WTC11 (cell line): ENCODE measurements at regions of chr18 and their contacts with region 1.

Region 1: GRCh38 chr18:37537868-37538525 is 27.6 kb downstream of the CELF4 start:
- DNase-seq: peak; percentile 94
- ATAC-seq: peak; percentile 73
- H3K4me3 Mint-ChIP-seq: peak overlapping the region; percentile 60
- H3K27ac Mint-ChIP-seq: peak overlapping the region; percentile 2; the same call in 1 of the 2 replicates
- H3K4me1 Mint-ChIP-seq: peaks cover 46% of the 10 kb centered on the region
- H3K27me3 Mint-ChIP-seq: peaks cover 20% of the 10 kb centered on the region
- CTCF ChIP-seq: peak; percentile 79

Region 2: DNA sequence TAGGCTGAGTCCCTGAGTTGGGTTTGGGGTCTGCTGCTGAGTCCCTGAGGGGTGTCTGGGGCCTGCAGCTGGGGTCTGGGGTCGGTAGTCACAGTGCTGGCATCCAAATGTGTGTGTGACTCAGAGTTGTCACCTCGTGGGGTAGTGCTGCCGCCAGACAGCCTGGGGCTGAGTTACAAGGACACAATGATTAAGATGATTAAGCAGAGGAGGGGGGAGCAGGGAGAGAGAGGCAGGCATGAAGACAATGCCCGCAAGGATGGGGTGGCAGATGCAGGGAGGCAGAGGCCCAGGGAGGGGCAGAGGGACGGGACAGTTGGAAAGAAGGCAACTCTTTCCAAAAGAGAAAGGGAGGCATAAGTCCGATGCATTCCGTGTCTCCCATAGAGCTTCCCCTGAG is 92.6 kb before region 1 on chr18:
- CTCF ChIA-PET with region 1: interaction called, 11 read pairs
- POLR2A ChIA-PET with region 1: no interaction called
- DNase-seq: no peak
- ATAC-seq: no peak
- H3K4me3 Mint-ChIP-seq: no peak overlapping the region
- H3K27ac Mint-ChIP-seq: no peak overlapping the region
- H3K4me1 Mint-ChIP-seq: peaks cover 41% of the 10 kb centered on the region
- H3K27me3 Mint-ChIP-seq: peaks cover 7% of the 10 kb centered on the region; the same call in 1 of the 2 replicates
- CTCF ChIP-seq: no peak

Region 3: GRCh38 chr18:37476182-37476581 is 61.8 kb before region 1 on chr18:
- CTCF ChIA-PET with region 1: interaction called, 10 read pairs
- POLR2A ChIA-PET with region 1: no interaction called
- DNase-seq: peak; percentile 68
- ATAC-seq: peak; percentile 73
- H3K4me3 Mint-ChIP-seq: no peak overlapping the region
- H3K27ac Mint-ChIP-seq: no peak overlapping the region
- H3K4me1 Mint-ChIP-seq: peaks cover 21% of the 10 kb centered on the region
- H3K27me3 Mint-ChIP-seq: peaks cover 3% of the 10 kb centered on the region
- CTCF ChIP-seq: peak; percentile 80

Region 4: DNA sequence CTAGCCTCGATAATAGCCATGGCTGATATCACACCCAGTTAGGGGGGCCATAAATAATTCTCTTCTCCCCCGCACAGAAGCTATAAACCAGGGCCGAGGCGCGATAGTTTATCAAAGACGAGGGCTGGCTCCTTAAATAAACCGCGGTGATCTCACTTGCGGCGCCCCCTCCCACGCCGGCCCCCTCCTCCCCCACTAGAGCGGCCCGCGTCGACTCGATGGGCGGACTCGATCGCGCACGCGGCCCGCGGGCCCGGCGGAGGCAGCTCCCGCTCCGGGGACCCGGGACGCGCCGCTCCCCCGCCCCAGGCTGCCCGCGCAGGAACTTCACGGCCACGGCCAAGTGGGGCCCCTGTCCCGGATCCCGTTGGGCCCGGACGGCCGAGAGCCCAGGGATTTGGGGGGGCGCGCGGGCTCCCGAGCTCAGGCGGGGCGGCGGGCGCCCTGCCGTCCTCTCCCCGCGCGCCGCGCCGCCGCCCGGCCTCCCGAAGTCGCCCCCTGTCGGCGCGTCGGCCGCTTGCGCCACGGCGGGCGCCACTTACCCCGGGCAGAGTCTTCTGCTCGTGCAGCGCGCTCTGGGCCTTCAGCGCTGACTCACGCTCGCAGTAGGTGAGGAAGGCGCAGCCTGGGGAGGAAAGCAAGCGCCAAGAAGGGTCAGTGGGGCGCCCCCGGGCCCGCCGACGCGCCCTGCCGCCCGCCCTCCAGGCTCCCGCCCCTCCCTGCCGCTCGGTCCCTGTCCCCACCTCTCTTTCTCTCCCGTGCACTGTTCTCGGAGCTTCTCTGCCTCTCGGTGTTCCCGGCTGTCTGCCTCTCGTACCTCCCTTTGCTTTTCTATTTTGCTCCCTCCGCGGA is 52.8 kb before region 1 on chr18:
- CTCF ChIA-PET with region 1: interaction called, 54 read pairs
- POLR2A ChIA-PET with region 1: no interaction called
- DNase-seq: peak; percentile 72
- ATAC-seq: peak; percentile 68
- H3K4me3 Mint-ChIP-seq: peak overlapping the region; percentile 66
- H3K27ac Mint-ChIP-seq: no peak overlapping the region
- H3K4me1 Mint-ChIP-seq: peaks cover 85% of the 10 kb centered on the region
- H3K27me3 Mint-ChIP-seq: peaks cover 37% of the 10 kb centered on the region
- CTCF ChIP-seq: peak; percentile 50; the same call in 1 of the 2 replicates

Region 5: DNA sequence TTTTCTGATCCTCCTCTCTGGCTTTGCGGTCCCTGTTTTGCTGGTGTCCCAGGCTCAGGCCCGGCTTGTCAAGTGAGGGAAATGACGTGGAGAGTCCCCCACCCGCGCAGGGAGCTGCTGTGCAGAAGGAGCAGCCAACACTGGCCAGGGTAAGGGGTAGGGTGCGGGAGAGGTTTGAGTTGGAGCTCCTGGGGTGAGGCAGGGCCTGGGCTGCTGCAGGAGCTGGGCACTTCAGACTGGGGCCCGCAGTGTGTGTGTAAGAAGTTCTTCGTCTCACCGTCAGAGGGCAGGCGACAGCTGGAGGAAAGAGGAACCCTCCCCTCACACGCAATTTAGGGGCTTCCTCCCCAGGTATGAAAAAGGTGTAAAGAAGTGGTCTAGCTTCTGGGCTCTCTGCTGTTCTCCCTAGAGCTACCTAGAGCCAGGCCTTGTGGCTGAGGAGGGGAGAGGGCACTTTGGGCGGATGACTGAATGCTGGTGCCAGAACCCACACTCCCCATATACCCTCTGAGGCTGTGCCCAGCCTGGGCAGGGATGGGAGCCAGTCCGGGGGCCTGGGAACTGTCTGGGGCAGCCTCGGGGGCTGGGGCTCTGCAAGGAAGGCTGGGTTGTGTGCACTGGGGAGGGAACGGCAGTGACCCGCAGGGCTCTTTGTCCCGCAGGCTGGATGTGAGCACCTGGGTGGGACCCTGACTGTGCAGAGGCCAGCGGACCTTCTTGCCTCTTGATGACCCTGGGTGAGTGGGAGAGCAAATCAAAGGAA is 15.8 kb after region 1 on chr18:
- CTCF ChIA-PET with region 1: interaction called, 19 read pairs
- POLR2A ChIA-PET with region 1: no interaction called
- DNase-seq: peak; percentile 69
- ATAC-seq: peak; percentile 81
- H3K4me3 Mint-ChIP-seq: peak overlapping the region; percentile 52
- H3K27ac Mint-ChIP-seq: no peak overlapping the region
- H3K4me1 Mint-ChIP-seq: peaks cover 17% of the 10 kb centered on the region
- H3K27me3 Mint-ChIP-seq: peaks cover 57% of the 10 kb centered on the region
- CTCF ChIP-seq: peak; percentile 43; the same call in 1 of the 2 replicates

Region 6: GRCh38 chr18:37634516-37634915 is 96.5 kb after region 1 on chr18:
- CTCF ChIA-PET with region 1: no interaction called
- POLR2A ChIA-PET with region 1: no interaction called
- DNase-seq: no peak
- ATAC-seq: no peak
- H3K4me3 Mint-ChIP-seq: no peak overlapping the region
- H3K27ac Mint-ChIP-seq: no peak overlapping the region
- H3K4me1 Mint-ChIP-seq: peaks cover 2% of the 10 kb centered on the region
- H3K27me3 Mint-ChIP-seq: peaks cover 15% of the 10 kb centered on the region
- CTCF ChIP-seq: no peak